Panc1 (cell line): ENCODE measurements at regions of chr12 and their contacts with region 1.

Region 1: DNA sequence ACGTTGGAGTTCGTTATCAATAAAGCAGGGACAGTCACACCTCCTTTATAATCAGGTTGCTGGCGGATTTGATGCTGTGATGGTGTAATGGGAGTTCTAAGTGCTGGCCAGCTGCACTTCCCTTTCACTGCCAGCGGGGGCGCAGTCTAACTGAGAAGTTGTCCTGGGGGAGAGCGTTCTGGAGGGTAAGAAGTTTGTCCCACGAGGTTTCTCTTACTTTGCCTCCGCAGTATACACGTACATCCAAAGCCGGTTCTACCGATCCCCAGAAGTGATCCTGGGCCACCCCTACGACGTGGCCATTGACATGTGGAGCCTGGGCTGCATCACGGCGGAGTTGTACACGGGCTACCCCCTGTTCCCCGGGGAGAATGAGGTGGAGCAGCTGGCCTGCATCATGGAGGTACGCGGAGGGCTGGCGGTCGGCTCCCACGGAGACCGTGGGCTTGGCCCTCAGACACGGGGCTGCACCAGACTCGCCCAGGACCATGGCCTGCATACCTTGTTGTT is 42.7 kb downstream of the DYRK4 start:
- DNase-seq: peak; percentile 71
- ATAC-seq: peak; percentile 100
- H3K4me3 ChIP-seq: peak overlapping the region; percentile 87 to 90
- H3K27ac ChIP-seq: peak overlapping the region; percentile 82
- H3K4me1 ChIP-seq: no peaks in the 10 kb centered on the region; the same call in 1 of the 2 replicates
- H3K27me3 ChIP-seq: no peaks in the 10 kb centered on the region; the same call in 1 of the 2 replicates
- CTCF ChIP-seq: peak; percentile 94

Region 2: GRCh38 chr12:4787965-4788364 is 183.2 kb after region 1 on chr12:
- CTCF ChIA-PET with region 1: no interaction called
- POLR2A ChIA-PET with region 1: interaction called, 12 read pairs
- in situ Hi-C with region 1: no loop called
- intact Hi-C with region 1: no loop called
- DNase-seq: no peak
- ATAC-seq: no peak
- H3K4me3 ChIP-seq: no peak overlapping the region
- H3K27ac ChIP-seq: no peak overlapping the region
- H3K4me1 ChIP-seq: no peaks in the 10 kb centered on the region
- H3K27me3 ChIP-seq: no peaks in the 10 kb centered on the region
- CTCF ChIP-seq: no peak

Region 3: GRCh38 chr12:5280091-5280490 is 675.4 kb after region 1 on chr12:
- CTCF ChIA-PET with region 1: no interaction called
- POLR2A ChIA-PET with region 1: no interaction called
- in situ Hi-C with region 1: no loop called
- intact Hi-C with region 1: no loop called
- DNase-seq: no peak
- ATAC-seq: no peak
- H3K4me3 ChIP-seq: no peak overlapping the region
- H3K27ac ChIP-seq: no peak overlapping the region
- H3K4me1 ChIP-seq: no peaks in the 10 kb centered on the region
- H3K27me3 ChIP-seq: no peaks in the 10 kb centered on the region
- CTCF ChIP-seq: no peak